ENCODE measurements at regions of chr16 and their contacts with region 1.

Region 1: GRCh38 chr16:88856828-88857733 is at the starts of genes GALNS and TRAPPC2L:
- DNase-seq: peak; percentile 95 to 100 (median 98)
- ATAC-seq: peak; percentile 95
- H3K4me3 ChIP-seq: peak within 1 kb of the TSS; percentile 98
- H3K4me3 Mint-ChIP-seq: peak within 1 kb of the TSS; percentile 94 to 100 (median 98)
- H3K27ac ChIP-seq: peak within 1 kb of the TSS; percentile 71
- H3K27ac Mint-ChIP-seq: peak within 1 kb of the TSS; percentile 88 to 100 (median 94)
- H3K4me1 ChIP-seq: peaks cover 20 to 25% of the 10 kb centered on the region in 2 donors
- H3K4me1 Mint-ChIP-seq: peaks cover 24 to 46% (median 41%) of the 10 kb centered on the region in 7 donors
- H3K27me3 ChIP-seq: no peaks in the 10 kb centered on the region
- H3K27me3 Mint-ChIP-seq: no peaks in the 10 kb centered on the region
- total RNA-seq, gene GALNS: 48.6 to 64.3 (median 57.5) TPM
- total RNA-seq, gene TRAPPC2L: 32.3 to 73.4 (median 60.1) TPM

Region 2: GRCh38 chr16:88700636-88701482 is 156.2 kb before region 1 on chr16:
- CTCF ChIA-PET with region 1: no interaction called
- POLR2A ChIA-PET with region 1: interaction called, 9 read pairs
- intact Hi-C with region 1: loop called (anchors 1 to 2 kb)
- DNase-seq: peak; percentile 86 to 96 (median 93)
- ATAC-seq: peak; percentile 91
- H3K4me3 ChIP-seq: peak overlapping the region; percentile 56
- H3K4me3 Mint-ChIP-seq: peak overlapping the region; percentile 78 to 98 (median 94)
- H3K27ac ChIP-seq: peak overlapping the region; percentile 88
- H3K27ac Mint-ChIP-seq: peak overlapping the region; percentile 85 to 98 (median 97)
- H3K4me1 ChIP-seq: peaks cover 32 to 60% of the 10 kb centered on the region in 2 donors
- H3K4me1 Mint-ChIP-seq: peaks cover 36 to 69% (median 47%) of the 10 kb centered on the region in 7 donors
- H3K27me3 ChIP-seq: no peaks in the 10 kb centered on the region
- H3K27me3 Mint-ChIP-seq: no peaks in the 10 kb centered on the region

Region 3: DNA sequence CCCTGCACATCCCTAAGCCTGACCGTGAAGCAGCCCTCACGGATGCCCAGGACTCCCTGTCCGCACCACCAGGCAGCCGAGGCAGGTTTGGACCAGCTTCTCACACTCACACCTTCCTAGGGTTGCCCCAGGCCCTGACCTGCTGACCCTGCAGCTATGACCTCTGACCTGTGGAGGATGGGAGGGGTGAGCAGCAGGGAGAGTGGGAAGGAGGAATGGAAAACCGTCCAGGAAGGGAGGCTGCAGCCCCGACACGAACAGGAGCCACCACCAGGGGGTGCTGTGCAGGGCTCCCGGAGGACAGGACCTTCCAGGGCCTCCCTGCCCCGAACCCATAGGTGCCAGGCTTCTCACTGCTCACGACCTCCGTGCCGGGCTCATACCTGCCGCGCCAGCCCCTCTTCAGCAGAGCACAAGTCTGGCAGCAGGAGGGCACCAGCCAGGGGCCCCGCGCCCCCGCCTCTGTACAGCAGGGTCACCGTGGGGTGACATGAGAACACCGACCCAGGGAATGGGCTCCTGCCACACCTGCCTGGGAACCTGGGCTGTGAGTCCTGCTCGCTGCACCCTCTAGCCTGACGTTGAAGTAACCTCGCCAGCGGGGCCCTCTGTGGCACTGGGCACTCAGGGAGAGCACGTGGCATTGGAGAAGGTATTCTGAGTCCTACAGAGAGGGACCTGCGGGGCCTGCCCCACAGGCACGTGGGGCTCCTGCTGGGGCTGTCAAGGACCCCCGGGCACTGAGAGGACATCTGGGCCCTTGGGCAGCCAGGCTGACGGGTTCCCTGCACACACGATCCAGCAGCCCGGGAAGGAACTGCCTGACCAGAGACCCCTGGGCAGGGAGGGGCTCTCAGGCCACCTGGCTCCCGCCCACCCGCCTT is 113.1 kb before region 1 on chr16:
- CTCF ChIA-PET with region 1: interaction called, 9 read pairs
- POLR2A ChIA-PET with region 1: interaction called, 4 read pairs
- intact Hi-C with region 1: loop called (anchors 1 kb)
- DNase-seq: peak; percentile 55 to 81 (median 69)
- ATAC-seq: peak; percentile 71
- H3K4me3 ChIP-seq: no peak overlapping the region
- H3K4me3 Mint-ChIP-seq: peak overlapping the region in 3 of 10 donors; percentile 16 to 69 (median 44)
- H3K27ac ChIP-seq: no peak overlapping the region
- H3K27ac Mint-ChIP-seq: peak overlapping the region in 1 of 9 donors; percentile 29
- H3K4me1 ChIP-seq: peaks cover 22 to 31% of the 10 kb centered on the region in 2 donors
- H3K4me1 Mint-ChIP-seq: peaks cover 9 to 27% (median 17%) of the 10 kb centered on the region in 7 donors
- H3K27me3 ChIP-seq: no peaks in the 10 kb centered on the region
- H3K27me3 Mint-ChIP-seq: no peaks in the 10 kb centered on the region

Region 4: GRCh38 chr16:88803264-88803987 is 53.7 kb before region 1 on chr16 and contains the start of gene CDT1:
- CTCF ChIA-PET with region 1: no interaction called
- POLR2A ChIA-PET with region 1: interaction called, 42 read pairs
- intact Hi-C with region 1: loop called in 1 of 2 experiments (anchors 2 kb)
- DNase-seq: peak; percentile 73 to 96 (median 85)
- ATAC-seq: peak; percentile 85
- H3K4me3 ChIP-seq: peak within 1 kb of the TSS; percentile 68
- H3K4me3 Mint-ChIP-seq: peak within 1 kb of the TSS; percentile 82 to 90 (median 87)
- H3K27ac ChIP-seq: peak within 1 kb of the TSS; percentile 76
- H3K27ac Mint-ChIP-seq: peak within 1 kb of the TSS; percentile 77 to 90 (median 85)
- H3K4me1 ChIP-seq: peaks cover 10 to 15% of the 10 kb centered on the region in 2 donors
- H3K4me1 Mint-ChIP-seq: peaks cover 9 to 36% (median 20%) of the 10 kb centered on the region in 7 donors
- H3K27me3 ChIP-seq: no peaks in the 10 kb centered on the region
- H3K27me3 Mint-ChIP-seq: no peaks in the 10 kb centered on the region
- total RNA-seq, gene CDT1: 0.35 to 79.2 (median 1.6) TPM in 4 of 5 experiments, not detected in the other

Region 5: GRCh38 chr16:89099905-89100304 is 242.8 kb after region 1 on chr16:
- CTCF ChIA-PET with region 1: no interaction called
- POLR2A ChIA-PET with region 1: interaction called, 3 read pairs
- intact Hi-C with region 1: loop called in 1 of 2 experiments (anchors 5 kb)
- DNase-seq: no peak
- ATAC-seq: no peak
- H3K4me3 ChIP-seq: no peak overlapping the region
- H3K4me3 Mint-ChIP-seq: peak overlapping the region in 7 of 10 donors; percentile 20 to 96 (median 53)
- H3K27ac ChIP-seq: no peak overlapping the region
- H3K27ac Mint-ChIP-seq: peak overlapping the region; percentile 51 to 100 (median 83)
- H3K4me1 ChIP-seq: peaks cover 42 to 66% of the 10 kb centered on the region in 2 donors
- H3K4me1 Mint-ChIP-seq: peaks cover 46 to 84% (median 70%) of the 10 kb centered on the region in 7 donors
- H3K27me3 ChIP-seq: no peaks in the 10 kb centered on the region
- H3K27me3 Mint-ChIP-seq: no peaks in the 10 kb centered on the region

Region 6: DNA sequence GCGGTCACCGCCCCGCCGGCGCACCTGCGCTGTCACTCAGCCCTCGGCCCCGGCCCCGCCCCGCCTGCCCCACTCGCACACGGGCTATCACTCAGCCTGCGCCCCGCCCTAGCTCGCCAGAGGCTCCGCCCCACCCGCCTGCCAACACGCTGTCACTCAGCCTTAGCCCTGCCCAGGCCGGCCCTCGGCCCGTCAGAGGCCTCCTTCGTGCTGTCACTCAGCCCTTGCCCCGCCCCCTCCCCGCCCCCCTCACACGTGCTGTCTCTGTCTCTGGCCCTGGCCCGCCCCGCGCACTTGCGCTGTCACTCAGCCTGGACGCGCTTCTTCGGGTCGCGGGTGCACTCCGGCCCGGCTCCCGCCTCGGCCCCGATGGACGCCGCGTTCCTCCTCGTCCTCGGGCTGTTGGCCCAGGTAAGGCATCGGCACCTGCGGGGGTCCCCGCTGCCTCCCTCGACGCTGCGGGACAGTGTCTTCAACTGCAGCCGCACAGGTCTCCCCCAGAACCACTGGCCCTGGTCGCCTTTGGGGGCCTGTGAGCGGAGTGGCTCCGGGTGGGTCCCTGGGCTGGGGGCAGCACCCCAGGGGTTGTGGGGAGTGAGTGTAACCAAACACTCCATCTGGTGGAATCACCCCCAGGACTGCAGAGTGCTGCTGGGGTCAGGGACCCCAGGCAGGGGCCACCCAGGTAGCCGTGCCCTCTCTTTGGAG is 314.5 kb after region 1 on chr16 and contains the start of gene CDH15:
- CTCF ChIA-PET with region 1: no interaction called
- POLR2A ChIA-PET with region 1: interaction called, 3 read pairs
- intact Hi-C with region 1: loop called (anchors 1 kb)
- DNase-seq: peak; percentile 79 to 96 (median 91)
- ATAC-seq: peak; percentile 97
- H3K4me3 ChIP-seq: peak within 1 kb of the TSS; percentile 51
- H3K4me3 Mint-ChIP-seq: peak within 1 kb of the TSS; percentile 65 to 88 (median 76)
- H3K27ac ChIP-seq: no peak within 1 kb of the TSS
- H3K27ac Mint-ChIP-seq: peak within 1 kb of the TSS in 5 of 9 donors; percentile 51 to 86 (median 75)
- H3K4me1 ChIP-seq: peaks cover 8 to 21% of the 10 kb centered on the region in 2 donors
- H3K4me1 Mint-ChIP-seq: peaks cover 6 to 10% (median 7%) of the 10 kb centered on the region in 7 donors
- H3K27me3 ChIP-seq: no peaks in the 10 kb centered on the region
- H3K27me3 Mint-ChIP-seq: peaks cover 0 to 6% (median 0%) of the 10 kb centered on the region in 5 donors
- total RNA-seq, gene CDH15: not detected

Region 7: DNA sequence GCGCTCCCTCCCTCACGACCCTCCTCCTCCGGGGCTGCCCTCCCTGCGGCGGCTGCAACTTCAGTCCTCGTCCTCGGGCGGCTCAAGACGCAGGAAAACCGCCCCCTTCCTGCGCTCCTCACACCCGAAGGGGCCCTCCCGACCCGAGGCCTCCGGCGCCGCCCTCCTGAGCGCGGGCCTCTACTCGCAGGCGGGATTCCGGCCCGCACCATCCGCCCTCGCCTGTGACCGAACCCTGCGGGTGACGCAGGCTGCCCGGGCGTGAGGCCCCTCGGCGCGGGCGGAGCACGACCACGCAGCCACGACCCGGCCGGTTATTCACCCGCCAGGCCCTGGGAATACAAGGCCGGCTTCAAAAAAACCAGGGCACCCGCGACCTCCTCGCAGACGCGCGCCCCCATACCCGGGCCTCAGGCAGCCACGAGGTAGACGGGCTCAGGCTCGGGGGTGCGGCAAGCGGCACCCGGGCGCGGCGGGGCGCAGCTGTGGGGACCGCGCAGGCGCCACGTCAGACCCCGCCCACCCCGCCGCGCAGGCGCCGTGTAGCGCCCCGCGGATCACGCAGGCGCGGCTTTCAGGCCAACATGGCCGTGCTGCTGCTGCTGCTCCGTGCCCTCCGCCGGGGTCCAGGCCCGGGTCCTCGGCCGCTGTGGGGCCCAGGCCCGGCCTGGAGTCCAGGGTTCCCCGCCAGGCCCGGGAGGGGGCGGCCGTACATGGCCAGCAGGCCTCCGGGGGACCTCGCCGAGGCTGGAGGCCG is 650.9 kb after region 1 on chr16 and contains the start of gene SPG7:
- CTCF ChIA-PET with region 1: no interaction called
- POLR2A ChIA-PET with region 1: interaction called, 4 read pairs
- intact Hi-C with region 1: loop called in 1 of 2 experiments (anchors 5 kb)
- DNase-seq: peak; percentile 82 to 98 (median 95)
- ATAC-seq: peak; percentile 83
- H3K4me3 ChIP-seq: peak within 1 kb of the TSS; percentile 64
- H3K4me3 Mint-ChIP-seq: peak within 1 kb of the TSS; percentile 82 to 96 (median 95)
- H3K27ac ChIP-seq: peak within 1 kb of the TSS; percentile 86
- H3K27ac Mint-ChIP-seq: peak within 1 kb of the TSS; percentile 87 to 97 (median 94)
- H3K4me1 ChIP-seq: peaks cover 30 to 33% of the 10 kb centered on the region in 2 donors
- H3K4me1 Mint-ChIP-seq: peaks cover 14 to 46% (median 31%) of the 10 kb centered on the region in 7 donors
- H3K27me3 ChIP-seq: no peaks in the 10 kb centered on the region
- H3K27me3 Mint-ChIP-seq: no peaks in the 10 kb centered on the region
- total RNA-seq, gene SPG7: 129 to 181 (median 170) TPM

Measured in naive thymus-derived CD4-positive, alpha-beta T cell (primary cell).